ENCODE measurements at regions of chr1 and their contacts with region 1.

Region 1: DNA sequence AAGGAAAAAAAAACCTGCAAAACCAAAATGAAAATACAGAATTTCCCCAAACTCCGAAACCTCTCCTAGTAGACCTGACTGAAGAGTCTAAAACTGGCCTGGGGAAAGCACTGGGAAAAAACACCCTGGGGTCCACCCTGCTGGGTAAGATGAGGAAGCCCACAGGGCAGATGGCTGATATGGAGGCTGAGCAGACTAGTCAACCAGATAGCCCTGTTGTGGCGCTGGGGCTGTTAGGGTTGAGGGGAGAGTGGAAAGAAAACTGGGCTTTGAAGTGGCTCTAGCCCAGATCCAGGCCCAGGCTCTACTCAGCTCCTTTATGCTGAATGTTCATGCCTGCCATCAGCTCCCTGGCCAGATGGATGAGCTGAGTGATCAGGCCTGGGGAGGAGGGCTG is 6.8 kb upstream of the SLAMF1 start:
- DNase-seq: no peak
- ATAC-seq: peak; percentile 71
- H3K4me3 ChIP-seq: peak overlapping the region; percentile 37; the same call in 1 of the 2 replicates
- H3K27ac ChIP-seq: peak overlapping the region; percentile 75
- H3K4me1 ChIP-seq: peaks cover 66% of the 10 kb centered on the region
- H3K27me3 ChIP-seq: no peaks in the 10 kb centered on the region
- CTCF ChIP-seq: no peak
- EP300 ChIP-seq: no peak
- POLR2A ChIP-seq: no peak
- RAD21 ChIP-seq: no peak

Region 2: DNA sequence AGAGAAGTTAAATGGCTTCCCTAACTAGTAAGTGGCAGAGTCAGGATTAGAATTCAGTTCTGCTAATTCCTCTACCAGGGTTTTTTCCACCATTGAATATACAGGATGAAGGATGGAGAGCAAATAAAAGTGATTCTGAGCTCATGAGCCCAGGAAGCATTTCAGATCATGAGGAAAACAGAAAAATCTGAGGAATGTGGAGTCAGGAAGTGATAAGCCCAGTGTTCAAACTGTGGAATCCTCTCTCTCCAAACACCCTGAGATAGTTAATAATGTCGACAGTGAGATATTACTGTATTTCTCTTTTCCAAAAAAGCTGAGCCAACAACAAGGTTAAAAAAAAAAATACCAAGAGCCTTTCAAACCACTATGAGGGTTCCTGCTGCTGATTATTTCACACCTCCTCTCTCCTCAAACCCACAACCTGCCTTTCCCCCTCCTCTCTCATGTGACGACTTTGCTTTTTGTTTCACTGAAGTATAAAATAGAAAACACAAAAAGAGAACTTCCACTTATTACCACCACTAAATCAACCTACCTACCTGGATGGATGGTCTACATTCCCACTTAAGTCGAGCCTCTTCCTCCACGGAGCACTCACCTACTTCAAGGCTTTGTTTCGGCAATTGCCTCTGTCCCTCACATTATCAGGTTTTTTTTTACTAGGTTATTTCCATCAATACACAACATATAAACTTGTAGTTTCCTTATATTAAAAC is 15.6 kb before region 1 on chr1:
- CTCF ChIA-PET with region 1: interaction called, 3 read pairs
- POLR2A ChIA-PET with region 1: interaction called, 4 read pairs
- RAD21 ChIA-PET with region 1: interaction called, 194 read pairs
- SMC1A ChIA-PET with region 1: interaction called, 259 read pairs
- in situ Hi-C with region 1: no loop called
- intact Hi-C with region 1: no loop called
- DNase-seq: no peak
- ATAC-seq: peak; percentile 29
- H3K4me3 ChIP-seq: peak overlapping the region; percentile 56
- H3K27ac ChIP-seq: peak overlapping the region; percentile 77
- H3K4me1 ChIP-seq: peaks cover 56% of the 10 kb centered on the region
- H3K27me3 ChIP-seq: no peaks in the 10 kb centered on the region
- CTCF ChIP-seq: no peak
- EP300 ChIP-seq: 0 out of 4 replicates have a peak, but pooled peaks have one; percentile 32 to 36
- POLR2A ChIP-seq: no peak
- RAD21 ChIP-seq: no peak

Region 3: GRCh38 chr1:160720356-160721085 is 66.9 kb after region 1 on chr1:
- CTCF ChIA-PET with region 1: no interaction called
- POLR2A ChIA-PET with region 1: no interaction called
- RAD21 ChIA-PET with region 1: no interaction called
- SMC1A ChIA-PET with region 1: no interaction called
- in situ Hi-C with region 1: no loop called
- intact Hi-C with region 1: no loop called
- DNase-seq: no peak
- ATAC-seq: no peak
- H3K4me3 ChIP-seq: no peak overlapping the region
- H3K27ac ChIP-seq: no peak overlapping the region
- H3K4me1 ChIP-seq: peaks cover 14% of the 10 kb centered on the region
- H3K27me3 ChIP-seq: no peaks in the 10 kb centered on the region
- CTCF ChIP-seq: no peak
- EP300 ChIP-seq: no peak
- POLR2A ChIP-seq: no peak
- RAD21 ChIP-seq: no peak

Measured in GM12878 (cell line).